A549 (cell line): ENCODE measurements at regions of chr3 and their contacts with region 1.

Region 1: GRCh38 chr3:16177962-16178627 is 3.6 kb downstream of the GALNT15 start:
- DNase-seq: peak; percentile 72 to 83
- ATAC-seq: peak; percentile 85 to 95
- H3K4me3 ChIP-seq: no peak overlapping the region
- H3K27ac ChIP-seq: peak overlapping the region; percentile 72 to 75
- H3K4me1 ChIP-seq: peaks cover 17% of the 10 kb centered on the region; the same call in 2 of the 3 replicates
- CTCF ChIP-seq: peak; percentile 95
- EP300 ChIP-seq: no peak
- POLR2A ChIP-seq: no peak
- RAD21 ChIP-seq: peak; percentile 98 to 99

Region 2: DNA sequence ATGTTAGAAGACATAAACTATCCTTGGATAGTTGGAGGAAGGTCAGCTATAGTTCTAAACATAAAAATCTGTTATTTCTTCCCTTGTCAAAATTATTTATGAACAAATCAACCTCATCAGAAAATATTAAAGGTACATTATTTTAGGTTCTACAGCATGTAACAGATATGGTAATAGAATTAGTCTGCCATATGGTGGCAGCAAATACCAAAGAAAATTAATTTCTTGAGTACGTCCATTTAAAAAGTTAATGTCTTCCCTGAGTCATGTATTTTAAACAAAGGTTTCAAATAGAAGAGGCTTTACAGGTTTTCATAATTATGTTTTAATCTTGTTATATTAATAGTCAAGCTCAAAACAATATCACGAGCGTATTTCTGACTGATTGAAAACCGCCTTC is 362.4 kb before region 1 on chr3:
- CTCF ChIA-PET with region 1: interaction called, 15 read pairs
- POLR2A ChIA-PET with region 1: no interaction called
- DNase-seq: peak; percentile 21 to 78
- ATAC-seq: peak in 1 of 2 experiments; percentile 84; a peak in 4 of 6 replicates
- H3K4me3 ChIP-seq: no peak overlapping the region
- H3K27ac ChIP-seq: no peak overlapping the region; a peak in 1 of 6 replicates
- H3K4me1 ChIP-seq: peaks cover 18% of the 10 kb centered on the region; the same call in 2 of the 3 replicates
- CTCF ChIP-seq: peak; percentile 68
- EP300 ChIP-seq: no peak
- POLR2A ChIP-seq: no peak
- RAD21 ChIP-seq: peak; percentile 82 to 83

Region 3: DNA sequence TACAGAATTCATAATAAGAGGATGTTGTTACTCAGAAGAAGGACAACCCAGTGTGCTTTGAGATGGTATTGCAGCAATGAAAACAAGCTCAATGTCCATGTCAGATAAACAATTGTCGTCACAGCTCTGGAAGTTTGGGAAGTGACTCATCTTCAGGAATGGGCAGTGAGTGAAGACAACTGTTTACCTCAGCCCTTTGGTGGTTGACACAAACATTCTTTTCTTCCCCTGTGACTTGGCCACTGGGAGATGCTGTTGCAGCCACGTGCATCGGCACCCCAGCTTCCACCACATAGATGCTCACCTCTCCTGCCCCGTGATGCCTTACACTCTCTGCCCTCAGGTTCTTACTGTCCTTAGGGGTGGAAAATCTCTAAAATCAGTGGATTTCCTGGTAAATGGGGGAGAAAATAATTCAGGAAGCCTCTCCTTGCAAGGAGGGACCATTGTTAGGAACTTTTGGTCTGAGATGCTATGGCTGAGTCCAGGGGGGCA is 117.7 kb before region 1 on chr3:
- CTCF ChIA-PET with region 1: interaction called, 53 read pairs
- POLR2A ChIA-PET with region 1: no interaction called
- DNase-seq: peak; percentile 96 to 98
- ATAC-seq: peak; percentile 92
- H3K4me3 ChIP-seq: no peak overlapping the region
- H3K27ac ChIP-seq: peak overlapping the region; percentile 84 to 90
- H3K4me1 ChIP-seq: peaks cover 55% of the 10 kb centered on the region
- CTCF ChIP-seq: peak; percentile 24; the same call in 1 of the 3 replicates
- EP300 ChIP-seq: peak; percentile 92
- POLR2A ChIP-seq: no peak
- RAD21 ChIP-seq: peak; percentile 55 to 60

Region 4: DNA sequence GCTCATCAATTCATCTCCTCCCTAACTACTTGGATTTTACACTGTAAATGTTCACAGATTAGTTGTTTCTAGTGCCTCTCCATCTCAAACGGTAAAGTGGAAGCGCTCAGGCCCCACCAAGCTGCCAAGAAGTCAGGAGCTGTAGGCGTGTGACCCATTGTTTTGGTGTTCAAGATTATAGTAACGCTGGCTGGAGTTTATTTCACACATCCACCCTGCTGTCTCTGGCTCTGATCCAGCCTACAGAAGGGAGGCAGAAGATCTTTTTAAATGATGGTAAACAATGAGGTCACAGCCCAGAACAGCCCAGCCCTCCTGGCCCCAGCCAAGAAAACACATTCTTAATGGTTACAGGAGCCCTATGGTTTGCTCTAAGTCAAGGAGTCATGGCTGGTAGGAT is 29.3 kb before region 1 on chr3:
- CTCF ChIA-PET with region 1: interaction called, 12 read pairs
- POLR2A ChIA-PET with region 1: no interaction called
- DNase-seq: peak in 1 of 2 experiments; percentile 62
- ATAC-seq: peak in 1 of 2 experiments; percentile 46; a peak in 2 of 6 replicates
- H3K4me3 ChIP-seq: no peak overlapping the region
- H3K27ac ChIP-seq: peak overlapping the region; percentile 16 to 34; a peak in 2 of 6 replicates
- H3K4me1 ChIP-seq: peaks cover 32% of the 10 kb centered on the region
- CTCF ChIP-seq: no peak
- EP300 ChIP-seq: no peak
- POLR2A ChIP-seq: no peak
- RAD21 ChIP-seq: no peak

Region 5: GRCh38 chr3:16240283-16241023 is 62.4 kb after region 1 on chr3:
- CTCF ChIA-PET with region 1: interaction called, 28 read pairs
- POLR2A ChIA-PET with region 1: no interaction called
- DNase-seq: peak; percentile 38 to 71
- ATAC-seq: peak; percentile 72 to 80
- H3K4me3 ChIP-seq: no peak overlapping the region
- H3K27ac ChIP-seq: peak overlapping the region; percentile 53 to 63; a peak in 5 of 6 replicates
- H3K4me1 ChIP-seq: peaks cover 22% of the 10 kb centered on the region
- CTCF ChIP-seq: no peak
- EP300 ChIP-seq: no peak
- POLR2A ChIP-seq: no peak
- RAD21 ChIP-seq: no peak